Uterus (tissue), 4 donors: ENCODE measurements at regions of chr2 and their contacts with region 1.

Region 1: GRCh38 chr2:13006829-13007717 is 290.3 kb downstream of the TRIB2 start:
- DNase-seq: peak; percentile 69 to 76
- H3K4me3 ChIP-seq: peak overlapping the region in 1 of 2 donors; percentile 17
- H3K27ac ChIP-seq: peak overlapping the region; percentile 57 to 58
- H3K4me1 ChIP-seq: no peaks in the 10 kb centered on the region
- H3K27me3 ChIP-seq: no peaks in the 10 kb centered on the region
- CTCF ChIP-seq: peak; percentile 86 to 92 (median 90)
- POLR2A ChIP-seq: no peak

Region 2: DNA sequence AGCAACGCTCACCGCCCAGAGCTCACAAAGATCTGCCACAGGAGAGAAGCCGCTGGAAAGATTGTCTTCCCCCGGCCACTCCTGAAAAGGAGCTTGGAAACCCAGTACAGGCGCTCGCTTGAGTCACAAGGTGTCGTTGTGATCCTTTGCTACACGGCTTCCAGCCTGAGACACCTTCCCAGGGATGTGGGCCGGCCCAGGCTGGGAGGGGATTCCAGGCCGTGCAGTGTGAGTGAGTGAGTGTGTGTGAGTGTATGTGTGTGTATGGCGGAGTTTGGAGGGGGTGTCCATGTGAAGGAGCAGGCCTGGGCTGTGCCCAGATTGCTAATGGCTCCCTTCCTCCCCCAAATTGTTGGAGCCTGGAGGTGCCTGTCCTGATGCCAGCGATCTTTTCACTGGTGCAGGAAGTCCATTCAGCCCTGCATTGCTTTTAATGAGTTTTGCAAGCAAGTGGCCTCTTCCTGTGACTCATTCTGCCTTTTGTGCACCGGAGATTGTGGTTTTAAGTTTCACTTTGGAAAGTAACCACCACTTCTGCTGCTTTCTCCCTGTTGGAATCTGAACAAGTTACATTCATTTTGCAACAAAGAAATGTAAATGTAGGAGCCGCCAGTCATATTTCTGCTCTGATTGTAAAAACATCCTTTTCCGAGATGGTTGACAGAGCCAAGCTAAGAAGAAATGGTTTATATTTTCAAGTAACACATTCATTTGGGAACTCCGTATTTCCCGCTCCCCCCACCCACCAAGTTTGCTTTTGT is 1176.9 kb before region 1 on chr2:
- intact Hi-C with region 1: loop called (anchors 10 kb)
- DNase-seq: peak; percentile 69 to 77
- H3K4me3 ChIP-seq: peak overlapping the region; percentile 11 to 27
- H3K27ac ChIP-seq: peak overlapping the region; percentile 82
- H3K4me1 ChIP-seq: peaks cover 6 to 7% of the 10 kb centered on the region in 2 donors
- H3K27me3 ChIP-seq: no peaks in the 10 kb centered on the region
- CTCF ChIP-seq: peak; percentile 33 to 50 (median 36)
- POLR2A ChIP-seq: no peak